B cell (primary cell): ENCODE measurements at regions of chr15 and their contacts with region 1.

Region 1: DNA sequence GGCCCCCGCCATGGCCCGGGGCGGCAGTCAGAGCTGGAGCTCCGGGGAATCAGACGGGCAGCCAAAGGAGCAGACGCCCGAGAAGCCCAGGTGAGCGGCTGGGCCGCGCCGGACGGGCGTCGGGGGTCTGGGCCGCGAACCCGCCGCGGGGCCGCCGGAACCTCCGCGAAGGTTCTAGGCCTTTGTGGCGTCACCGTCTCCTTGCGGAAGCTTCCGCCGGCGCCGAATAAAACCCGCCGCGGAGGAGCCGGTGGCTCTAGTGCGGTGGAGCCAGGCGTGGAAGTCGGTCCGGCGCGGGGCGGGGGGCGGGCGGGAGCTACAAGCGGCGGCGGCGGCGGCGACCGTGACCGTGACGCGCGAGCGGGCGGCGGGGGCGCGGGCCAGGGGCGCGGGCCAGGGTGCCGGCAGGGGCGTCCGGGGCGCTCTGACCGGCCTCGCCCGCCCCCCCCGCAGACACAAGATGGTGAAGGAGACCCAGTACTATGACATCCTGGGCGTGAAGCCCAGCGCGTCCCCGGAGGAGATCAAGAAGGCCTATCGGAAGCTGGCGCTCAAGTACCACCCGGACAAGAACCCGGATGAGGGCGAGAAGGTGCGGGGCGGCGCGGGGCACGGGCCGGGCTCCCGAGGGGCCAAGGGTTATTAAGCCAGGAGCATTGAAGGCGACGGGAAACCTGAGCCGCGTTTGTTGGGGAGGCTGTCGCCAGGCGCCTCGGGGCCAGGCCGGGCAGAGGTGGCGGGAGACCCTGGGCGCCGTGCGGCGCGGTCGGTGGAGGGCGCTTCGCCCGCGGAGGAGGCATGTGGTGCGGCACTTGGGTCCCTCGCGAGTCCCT is at the start of gene DNAJA4:
- DNase-seq: peak; percentile 74
- ATAC-seq: peak; percentile 59
- H3K4me3 ChIP-seq: peak within 1 kb of the TSS; percentile 23 to 80 (median 65)
- H3K4me3 Mint-ChIP-seq: peak within 1 kb of the TSS; percentile 88
- H3K27ac ChIP-seq: peak within 1 kb of the TSS; percentile 18 to 73
- H3K27ac Mint-ChIP-seq: peak within 1 kb of the TSS; percentile 89
- H3K4me1 ChIP-seq: peaks cover 10% of the 10 kb centered on the region in 2 donors
- H3K4me1 Mint-ChIP-seq: peaks cover 13% of the 10 kb centered on the region
- H3K27me3 ChIP-seq: peaks cover 0 to 3% (median 0%) of the 10 kb centered on the region in 4 experiments
- H3K27me3 Mint-ChIP-seq: no peaks in the 10 kb centered on the region
- CTCF ChIP-seq: no peak
- total RNA-seq, gene DNAJA4: 16.9 and 20.0 TPM in 2 replicates

Region 2: DNA sequence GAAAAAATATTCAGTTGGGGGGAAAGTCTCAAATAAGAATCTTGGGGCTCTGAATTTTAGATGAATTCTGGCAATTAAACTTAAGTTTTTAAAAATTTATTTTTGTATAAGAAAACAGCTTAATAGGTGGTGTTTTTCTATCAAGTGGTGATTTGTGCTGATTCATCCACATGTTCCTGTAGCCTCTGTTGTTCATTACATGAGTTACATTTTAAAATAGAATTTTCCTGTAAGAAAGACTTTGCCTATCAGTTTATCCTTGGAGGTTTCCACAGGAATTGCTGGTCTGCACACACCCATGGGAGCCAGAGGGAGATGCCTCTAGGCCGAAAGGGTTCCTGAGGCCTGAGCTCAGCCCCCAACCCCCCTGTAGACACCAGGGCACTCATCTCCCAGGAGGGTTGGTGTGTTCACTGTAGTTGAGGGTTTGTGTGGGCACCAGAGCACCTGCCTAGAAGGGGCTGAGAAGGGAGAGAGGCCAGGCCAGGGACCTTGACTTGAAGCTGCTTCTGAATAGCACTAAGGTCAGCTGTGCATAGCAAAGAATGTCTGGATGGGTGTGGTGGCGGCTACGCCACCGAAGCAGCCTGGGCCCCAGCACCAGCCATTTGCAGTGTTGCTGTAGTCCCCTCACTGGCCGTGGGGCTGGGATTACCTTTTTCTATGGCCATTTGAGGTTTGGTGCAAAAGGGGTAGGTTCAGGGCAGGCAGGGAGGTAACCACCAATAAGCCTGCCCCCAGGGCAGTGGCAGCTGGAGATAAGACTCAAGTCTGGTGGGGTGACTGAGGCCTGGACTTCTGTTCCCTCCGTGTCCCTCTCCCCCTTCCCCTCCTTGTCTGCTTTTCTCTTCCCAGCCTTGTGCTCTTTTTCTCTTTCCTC is 11.8 kb after region 1 on chr15:
- CTCF ChIA-PET with region 1: no interaction called
- POLR2A ChIA-PET with region 1: no interaction called
- intact Hi-C with region 1: no loop called
- DNase-seq: no peak
- ATAC-seq: no peak
- H3K4me3 ChIP-seq: no peak overlapping the region
- H3K4me3 Mint-ChIP-seq: no peak overlapping the region
- H3K27ac ChIP-seq: no peak overlapping the region
- H3K27ac Mint-ChIP-seq: no peak overlapping the region
- H3K4me1 ChIP-seq: no peaks in the 10 kb centered on the region
- H3K4me1 Mint-ChIP-seq: no peaks in the 10 kb centered on the region
- H3K27me3 ChIP-seq: no peaks in the 10 kb centered on the region
- H3K27me3 Mint-ChIP-seq: no peaks in the 10 kb centered on the region
- CTCF ChIP-seq: no peak

Region 3: DNA sequence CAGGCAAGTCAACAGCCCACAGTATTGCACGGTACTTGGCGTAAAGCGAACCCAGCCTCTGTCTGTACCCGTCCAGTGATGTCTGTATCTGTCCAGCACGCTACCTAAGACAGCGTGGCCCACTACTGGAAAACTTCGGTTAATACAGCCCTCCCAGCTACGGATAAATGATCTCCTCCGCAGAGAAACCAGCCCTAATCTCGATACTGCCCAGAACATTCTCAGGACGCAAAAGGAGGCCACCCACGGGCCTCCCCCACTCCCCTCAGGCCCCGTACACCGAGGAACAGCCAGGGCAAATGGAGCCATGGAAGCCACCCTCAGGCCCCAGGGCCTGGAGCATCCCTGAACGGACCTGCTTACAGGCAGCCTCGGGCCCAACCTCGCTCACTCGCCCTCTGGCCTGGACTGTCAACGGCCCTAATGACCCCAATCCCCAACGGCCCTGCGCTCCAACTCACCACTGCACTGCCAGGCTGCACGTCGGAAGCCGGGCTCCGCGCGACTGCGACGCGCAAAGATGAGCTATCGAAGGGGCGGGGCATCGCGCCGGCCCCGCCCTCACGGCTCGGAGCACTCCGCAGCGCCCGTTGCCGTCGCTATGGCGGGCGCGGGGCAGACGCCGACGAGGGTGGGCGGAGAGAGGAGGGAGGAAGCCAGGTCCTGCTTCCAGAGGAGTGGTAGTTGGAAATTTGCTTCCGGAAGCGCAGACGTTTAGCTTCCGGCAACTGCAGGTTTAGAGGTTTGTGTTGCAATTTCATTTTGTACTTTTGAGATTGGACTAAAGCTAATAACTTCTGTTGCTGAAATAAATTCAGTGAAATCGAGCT is 34.8 kb after region 1 on chr15 and contains the start of gene SKIC8:
- CTCF ChIA-PET with region 1: interaction called, 8 read pairs
- POLR2A ChIA-PET with region 1: interaction called, 4 read pairs
- intact Hi-C with region 1: loop called (anchors 1 kb)
- DNase-seq: peak; percentile 94
- ATAC-seq: peak; percentile 98
- H3K4me3 ChIP-seq: peak within 1 kb of the TSS; percentile 64 to 85 (median 75)
- H3K4me3 Mint-ChIP-seq: peak within 1 kb of the TSS; percentile 100
- H3K27ac ChIP-seq: peak within 1 kb of the TSS; percentile 41 to 74
- H3K27ac Mint-ChIP-seq: peak within 1 kb of the TSS; percentile 93
- H3K4me1 ChIP-seq: peaks cover 10 to 11% of the 10 kb centered on the region in 2 donors
- H3K4me1 Mint-ChIP-seq: peaks cover 21% of the 10 kb centered on the region
- H3K27me3 ChIP-seq: peaks cover 0 to 2% (median 0%) of the 10 kb centered on the region in 4 experiments
- H3K27me3 Mint-ChIP-seq: no peaks in the 10 kb centered on the region
- CTCF ChIP-seq: no peak
- total RNA-seq, gene SKIC8: 34.4 and 40.2 TPM in 2 replicates